Activated CD4-positive, alpha-beta T cell treated with anti-CD3 and anti-CD28 coated beads for 36 hours (primary cell): ENCODE measurements at regions of chr19 and their contacts with region 1.

Region 1: GRCh38 chr19:4867534-4868285 is at the start of gene PLIN3:
- DNase-seq: peak; percentile 98
- ATAC-seq: peak; percentile 95
- H3K4me3 Mint-ChIP-seq: peak within 1 kb of the TSS; percentile 73
- H3K27ac Mint-ChIP-seq: peak within 1 kb of the TSS; percentile 63
- H3K4me1 Mint-ChIP-seq: peaks cover 20% of the 10 kb centered on the region
- H3K27me3 Mint-ChIP-seq: peaks cover 2% of the 10 kb centered on the region
- total RNA-seq, gene PLIN3: 26.9 to 27.5 TPM

Region 2: DNA sequence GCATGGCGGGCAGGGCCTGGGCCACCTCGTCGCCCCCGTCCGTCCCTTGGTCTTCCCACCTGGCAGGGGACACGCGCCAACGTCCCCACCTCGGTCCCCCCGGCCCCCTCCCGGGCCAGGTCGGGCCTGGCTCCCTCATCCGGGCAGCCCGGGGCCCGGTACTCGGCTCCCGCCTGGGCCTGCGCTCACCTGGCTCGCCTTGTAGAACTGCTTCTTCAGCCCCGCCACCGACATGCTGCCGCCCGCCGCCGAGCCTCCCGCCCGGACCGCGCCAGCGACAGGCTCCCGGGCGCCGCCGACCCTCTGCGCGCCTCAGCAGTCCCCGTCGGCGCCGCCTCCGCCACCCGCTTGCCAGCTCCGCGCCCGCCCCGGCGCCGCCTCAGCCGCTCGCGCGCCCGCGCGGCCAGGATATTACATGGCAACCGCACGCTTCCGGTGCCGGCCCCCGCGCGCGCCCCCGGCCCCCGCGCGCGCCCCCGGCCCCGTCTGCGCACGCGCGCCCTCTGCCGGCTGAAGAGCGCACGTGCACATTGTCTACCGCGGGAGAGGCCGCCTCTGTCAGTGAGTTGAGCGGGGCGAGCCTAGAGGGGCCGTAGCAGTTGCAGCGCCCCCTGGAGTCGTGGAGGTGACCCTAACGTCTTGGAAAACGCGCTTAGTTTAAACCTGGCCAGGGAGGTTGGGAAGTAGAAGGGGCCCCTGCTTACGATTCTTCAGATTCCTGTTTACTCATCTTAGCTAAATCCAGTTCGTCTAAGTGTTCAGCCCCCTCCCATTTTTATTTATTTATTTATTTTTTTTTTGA is 467.4 kb before region 1 on chr19 and contains the start of gene SH3GL1:
- CTCF ChIA-PET with region 1: no interaction called
- POLR2A ChIA-PET with region 1: no interaction called
- intact Hi-C with region 1: no loop called
- DNase-seq: peak; percentile 95
- ATAC-seq: peak; percentile 54
- H3K4me3 Mint-ChIP-seq: peak within 1 kb of the TSS; percentile 93
- H3K27ac Mint-ChIP-seq: peak within 1 kb of the TSS; percentile 95
- H3K4me1 Mint-ChIP-seq: peaks cover 62% of the 10 kb centered on the region
- H3K27me3 Mint-ChIP-seq: no peaks in the 10 kb centered on the region
- total RNA-seq, gene SH3GL1: 42.0 to 46.8 TPM

Region 3: DNA sequence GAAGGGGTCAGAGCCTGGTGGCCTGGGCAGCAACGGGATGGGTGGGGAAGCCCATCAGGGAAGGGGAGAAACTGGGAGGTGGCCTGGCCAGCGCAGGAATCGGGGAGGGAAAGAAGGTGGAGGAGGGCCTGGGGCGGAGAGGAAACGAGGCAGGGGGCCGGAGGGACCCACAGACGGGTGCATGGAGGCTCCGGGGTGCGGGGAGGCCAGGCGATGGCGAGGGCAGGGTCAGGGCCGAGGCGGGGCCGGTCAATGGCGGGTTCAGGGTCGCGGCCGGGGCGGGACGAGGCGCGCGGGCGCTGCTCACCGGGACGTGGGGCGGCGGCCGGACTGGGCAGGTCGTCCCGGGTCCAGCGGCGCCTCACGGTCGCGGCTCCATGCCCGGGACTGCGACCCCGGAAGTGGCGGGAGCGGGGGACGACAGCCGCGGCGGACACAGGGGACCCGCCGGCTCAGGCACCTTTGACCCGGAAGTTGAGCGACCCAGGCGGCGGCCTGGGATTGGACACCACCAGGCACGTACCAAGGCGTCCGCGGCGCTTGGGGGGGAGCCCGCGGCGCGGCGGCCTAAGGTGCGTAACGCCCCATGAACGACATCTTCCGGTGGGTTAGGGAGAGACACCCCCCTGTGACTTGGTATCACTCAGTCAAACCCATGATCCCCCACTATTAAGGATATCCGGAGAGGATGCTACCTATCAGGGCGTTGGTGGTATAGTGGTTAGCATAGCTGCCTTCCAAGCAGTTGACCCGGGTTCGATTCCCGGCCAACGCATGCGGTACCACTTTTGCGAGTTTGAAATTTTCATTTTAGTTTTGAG is 144.1 kb before region 1 on chr19 and contains the start of gene DPP9:
- CTCF ChIA-PET with region 1: interaction called, 4 read pairs
- POLR2A ChIA-PET with region 1: no interaction called
- intact Hi-C with region 1: loop called in 1 of 2 experiments (anchors 1 kb)
- DNase-seq: peak; percentile 98
- ATAC-seq: peak; percentile 95
- H3K4me3 Mint-ChIP-seq: peak within 1 kb of the TSS; percentile 92
- H3K27ac Mint-ChIP-seq: peak within 1 kb of the TSS; percentile 93
- H3K4me1 Mint-ChIP-seq: peaks cover 26% of the 10 kb centered on the region
- H3K27me3 Mint-ChIP-seq: no peaks in the 10 kb centered on the region
- total RNA-seq, gene DPP9: 49.2 to 51.3 TPM

Region 4: GRCh38 chr19:4831304-4831978 is 36.3 kb before region 1 on chr19 and contains the start of gene TICAM1:
- CTCF ChIA-PET with region 1: no interaction called
- POLR2A ChIA-PET with region 1: no interaction called
- intact Hi-C with region 1: loop called in 1 of 2 experiments (anchors 1 kb)
- DNase-seq: peak; percentile 87
- ATAC-seq: peak; percentile 91
- H3K4me3 Mint-ChIP-seq: peak within 1 kb of the TSS; percentile 85
- H3K27ac Mint-ChIP-seq: peak within 1 kb of the TSS; percentile 87
- H3K4me1 Mint-ChIP-seq: peaks cover 22% of the 10 kb centered on the region
- H3K27me3 Mint-ChIP-seq: no peaks in the 10 kb centered on the region
- total RNA-seq, gene TICAM1: 23.4 to 24.1 TPM

Region 5: DNA sequence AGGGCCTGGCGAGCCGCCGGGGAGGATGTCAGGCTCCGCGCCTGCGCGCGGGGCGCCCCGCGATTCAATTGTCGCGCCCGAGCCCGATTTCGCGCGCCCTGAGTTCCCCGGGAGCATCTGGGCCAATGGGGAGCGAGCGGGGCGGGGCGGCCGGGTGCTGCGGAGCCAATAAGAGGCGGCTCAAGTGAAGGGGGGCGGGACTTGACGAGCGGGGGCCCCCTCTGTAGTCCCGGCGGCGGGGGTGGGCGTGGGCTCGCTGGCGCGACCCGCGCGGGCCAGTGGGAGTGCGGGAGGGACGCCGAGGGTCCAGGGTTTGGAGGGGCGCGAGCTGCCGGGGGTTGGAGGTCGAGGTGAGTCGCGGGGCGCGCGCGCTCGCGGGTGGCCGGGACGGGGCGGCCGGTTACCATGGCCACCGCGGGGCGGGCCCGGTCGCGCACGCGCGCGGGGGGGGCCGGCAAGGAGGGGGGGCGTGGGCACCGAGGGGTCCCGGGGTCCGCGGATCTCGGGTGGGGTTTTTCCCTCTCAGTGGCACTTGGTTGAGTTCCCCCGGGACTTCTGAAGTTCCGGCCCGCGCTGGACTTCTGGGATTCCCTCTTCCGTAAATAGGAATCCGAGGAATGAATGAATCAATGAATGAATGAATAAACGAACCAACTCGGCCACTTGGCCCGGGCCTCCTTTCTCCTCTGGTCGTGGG is 42.3 kb after region 1 on chr19:
- CTCF ChIA-PET with region 1: interaction called, 52 read pairs
- POLR2A ChIA-PET with region 1: interaction called, 5 read pairs
- intact Hi-C with region 1: loop called (anchors 1 kb)
- DNase-seq: peak; percentile 98
- ATAC-seq: peak; percentile 78
- H3K4me3 Mint-ChIP-seq: peak overlapping the region; percentile 83
- H3K27ac Mint-ChIP-seq: peak overlapping the region; percentile 90
- H3K4me1 Mint-ChIP-seq: peaks cover 42% of the 10 kb centered on the region
- H3K27me3 Mint-ChIP-seq: no peaks in the 10 kb centered on the region